Astrocyte of the cerebellum (primary cell): ENCODE measurements at regions of chr11 and their contacts with region 1.

Region 1: DNA sequence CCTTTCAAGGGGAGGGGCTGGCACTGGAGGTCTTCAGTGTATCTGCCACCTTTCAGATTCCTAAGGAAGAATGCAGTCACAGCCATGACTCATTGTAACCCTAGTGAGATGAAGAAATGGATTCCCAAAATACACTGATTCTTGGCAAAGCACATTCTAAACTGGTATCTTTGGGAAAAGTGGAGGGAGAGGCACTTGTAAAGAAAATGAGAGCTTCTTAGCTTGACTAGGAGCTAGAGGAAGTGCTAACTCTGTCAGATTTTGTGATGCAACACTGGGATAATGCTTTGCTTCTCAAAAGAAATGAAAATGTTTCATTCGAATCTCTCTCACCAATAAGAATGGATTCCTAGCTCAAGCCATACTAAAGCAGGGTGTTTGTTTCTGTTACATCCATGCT is 14.3 kb downstream of the NRIP3 start:
- DNase-seq: no peak
- H3K4me3 ChIP-seq: no peak overlapping the region
- CTCF ChIP-seq: no peak

Region 2: DNA sequence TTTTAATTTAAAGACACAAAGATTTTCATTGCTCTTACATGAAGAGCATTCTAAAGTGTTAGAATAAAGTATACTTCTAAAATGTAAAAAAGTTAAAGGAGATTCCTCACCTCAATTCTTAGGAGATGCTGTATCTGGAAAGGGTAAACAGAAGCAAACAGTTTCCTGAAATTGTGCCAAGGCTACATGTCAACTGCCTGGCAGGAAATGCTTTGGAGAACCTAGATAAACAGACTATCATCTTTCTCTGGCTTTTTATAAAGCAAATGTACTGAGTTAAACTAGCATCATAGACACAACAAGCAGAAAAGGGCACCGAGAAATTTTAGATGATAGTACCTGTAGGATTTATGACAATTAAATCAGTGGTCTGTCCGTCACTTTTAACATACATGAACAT is 103.1 kb before region 1 on chr11:
- in situ Hi-C with region 1: loop called (anchors 5 kb)
- DNase-seq: no peak
- H3K4me3 ChIP-seq: no peak overlapping the region
- CTCF ChIP-seq: no peak

Region 3: GRCh38 chr11:8934749-8935478 is 54.5 kb before region 1 on chr11:
- in situ Hi-C with region 1: no loop called
- DNase-seq: no peak
- H3K4me3 ChIP-seq: no peak overlapping the region
- CTCF ChIP-seq: no peak